Activated CD4-positive, alpha-beta T cell treated with anti-CD3 and anti-CD28 coated beads for 36 hours (primary cell): ENCODE measurements at regions of chr20 and their contacts with region 1.

Region 1: DNA sequence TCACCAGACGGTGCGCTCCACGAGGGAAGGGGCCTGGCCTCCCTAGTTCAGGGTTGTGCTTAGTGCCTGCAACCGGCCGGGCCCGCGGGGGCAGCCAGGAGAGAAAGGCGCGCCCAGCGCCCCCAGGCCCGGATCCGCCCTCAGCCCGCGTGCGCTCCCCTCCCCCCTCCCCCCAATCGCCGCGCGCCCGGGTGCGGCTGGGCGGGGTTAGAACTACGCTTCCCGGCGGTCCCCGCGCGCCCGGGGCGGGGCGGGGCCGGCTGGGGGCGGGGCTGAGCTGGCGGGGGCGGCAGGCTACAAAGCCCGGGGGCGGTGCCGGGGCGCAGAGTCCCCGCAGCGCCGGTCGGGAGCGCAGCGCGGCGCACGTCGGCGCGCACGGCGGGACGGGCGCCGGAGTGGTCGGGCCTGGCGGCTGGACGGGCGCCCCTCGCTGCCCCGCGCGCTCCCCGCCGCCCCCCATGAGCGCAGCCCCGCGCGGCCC is at the start of gene RBM38:
- DNase-seq: peak; percentile 91
- ATAC-seq: peak; percentile 60
- H3K4me3 Mint-ChIP-seq: peak within 1 kb of the TSS; percentile 83
- H3K27ac Mint-ChIP-seq: peak within 1 kb of the TSS; percentile 97
- H3K4me1 Mint-ChIP-seq: peaks cover 44% of the 10 kb centered on the region
- H3K27me3 Mint-ChIP-seq: no peaks in the 10 kb centered on the region
- total RNA-seq, gene RBM38: 96.5 to 101 TPM

Region 2: DNA sequence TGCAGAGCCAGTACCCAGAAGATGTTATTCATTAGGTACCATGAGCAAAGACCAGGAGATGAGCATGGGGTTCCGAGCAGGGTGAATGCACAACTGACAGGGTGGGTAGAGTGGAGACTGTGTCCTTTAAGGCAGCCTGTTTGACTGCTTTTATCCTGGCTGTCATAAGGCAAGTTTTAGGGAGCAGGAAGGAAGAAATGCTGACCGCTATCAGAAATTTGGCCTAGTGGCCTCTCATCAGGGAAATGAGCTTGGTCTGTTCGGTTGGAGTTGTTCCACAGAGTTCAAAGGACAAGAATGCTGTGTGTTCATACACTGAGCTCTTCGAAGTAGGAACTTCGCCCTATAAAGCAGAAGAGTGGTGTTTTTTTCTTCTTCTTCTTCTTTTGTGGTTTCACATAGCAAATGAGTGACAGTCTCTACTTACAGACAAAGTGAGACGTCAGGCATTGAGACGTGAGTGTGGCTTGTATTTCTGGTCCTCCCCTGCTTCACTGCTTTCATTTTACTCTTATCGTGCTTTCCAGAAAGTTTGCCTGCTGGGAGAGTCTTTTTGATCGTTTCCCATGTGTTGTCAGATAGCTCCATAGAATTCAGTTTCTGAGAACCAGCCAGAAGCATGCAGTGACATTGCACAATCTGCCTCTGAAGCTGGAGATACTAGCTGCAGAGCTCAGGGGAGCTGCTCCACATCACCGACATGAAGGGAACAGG is 979.2 kb before region 1 on chr20 and contains the start of gene CASS4:
- CTCF ChIA-PET with region 1: no interaction called
- POLR2A ChIA-PET with region 1: no interaction called
- intact Hi-C with region 1: loop called in 1 of 2 experiments (anchors 10 kb)
- DNase-seq: peak; percentile 63
- ATAC-seq: peak; percentile 53
- H3K4me3 Mint-ChIP-seq: peak within 1 kb of the TSS; percentile 69
- H3K27ac Mint-ChIP-seq: peak within 1 kb of the TSS; percentile 94
- H3K4me1 Mint-ChIP-seq: peaks cover 47% of the 10 kb centered on the region
- H3K27me3 Mint-ChIP-seq: no peaks in the 10 kb centered on the region
- total RNA-seq, gene CASS4: 5.1 to 5.6 TPM

Region 3: GRCh38 chr20:57351042-57351783 is 39.9 kb before region 1 on chr20 and contains the start of gene RAE1:
- CTCF ChIA-PET with region 1: interaction called, 3 read pairs
- POLR2A ChIA-PET with region 1: no interaction called
- intact Hi-C with region 1: loop called (anchors 1 kb)
- DNase-seq: peak; percentile 94
- ATAC-seq: peak; percentile 84
- H3K4me3 Mint-ChIP-seq: peak within 1 kb of the TSS; percentile 96
- H3K27ac Mint-ChIP-seq: peak within 1 kb of the TSS; percentile 89
- H3K4me1 Mint-ChIP-seq: peaks cover 37% of the 10 kb centered on the region
- H3K27me3 Mint-ChIP-seq: no peaks in the 10 kb centered on the region
- total RNA-seq, gene RAE1: 42.7 to 48.9 TPM

Region 4: GRCh38 chr20:57530327-57530981 is 139.3 kb after region 1 on chr20:
- CTCF ChIA-PET with region 1: no interaction called
- POLR2A ChIA-PET with region 1: no interaction called
- intact Hi-C with region 1: no loop called
- DNase-seq: no peak
- ATAC-seq: no peak
- H3K4me3 Mint-ChIP-seq: no peak overlapping the region
- H3K27ac Mint-ChIP-seq: no peak overlapping the region
- H3K4me1 Mint-ChIP-seq: no peaks in the 10 kb centered on the region
- H3K27me3 Mint-ChIP-seq: peaks cover 15% of the 10 kb centered on the region

Region 5: DNA sequence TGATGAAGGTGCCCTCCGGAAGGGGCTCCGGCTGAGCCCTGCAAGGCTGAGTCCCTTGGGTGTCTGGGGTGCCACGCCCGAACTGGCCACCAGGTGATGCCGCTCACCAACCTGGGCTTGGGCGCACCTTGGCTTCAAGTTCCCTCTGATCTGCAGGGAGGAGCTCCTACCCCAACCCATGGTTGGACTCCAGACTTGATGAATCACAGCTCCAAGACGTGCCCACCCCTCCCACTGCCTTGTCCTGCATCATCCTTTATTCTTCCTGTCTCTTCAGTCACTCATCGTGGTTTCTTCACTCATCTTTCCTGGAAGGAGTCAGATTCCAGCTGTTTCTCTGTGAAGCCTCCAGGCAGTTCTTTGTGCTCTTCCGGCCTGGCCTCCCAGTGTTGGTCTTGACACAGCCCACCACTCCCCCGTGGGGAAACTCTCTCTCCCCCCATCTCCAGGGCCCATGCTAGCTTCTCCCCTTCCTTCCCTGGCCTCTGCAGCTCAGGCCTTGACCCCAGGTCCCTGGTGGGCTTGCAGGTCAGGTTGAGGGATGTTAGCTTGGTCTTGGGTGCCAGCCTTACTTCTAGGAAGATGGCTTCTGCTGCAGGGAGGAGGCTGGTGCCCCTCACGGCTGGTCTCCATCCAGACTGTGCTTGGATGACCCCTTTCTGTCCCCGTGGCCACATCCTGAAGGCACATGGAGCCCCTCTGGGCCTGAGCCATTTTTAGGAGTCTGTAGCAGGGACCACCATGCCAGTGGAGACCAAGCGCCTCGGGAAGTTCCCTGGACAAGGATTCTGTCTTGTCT is 231.7 kb after region 1 on chr20:
- CTCF ChIA-PET with region 1: no interaction called
- POLR2A ChIA-PET with region 1: interaction called, 4 read pairs
- intact Hi-C with region 1: loop called in 1 of 2 experiments (anchors 1 kb)
- DNase-seq: peak; percentile 86
- ATAC-seq: peak; percentile 10
- H3K4me3 Mint-ChIP-seq: peak overlapping the region; percentile 36
- H3K27ac Mint-ChIP-seq: peak overlapping the region; percentile 19
- H3K4me1 Mint-ChIP-seq: peaks cover 64% of the 10 kb centered on the region
- H3K27me3 Mint-ChIP-seq: no peaks in the 10 kb centered on the region

Region 6: DNA sequence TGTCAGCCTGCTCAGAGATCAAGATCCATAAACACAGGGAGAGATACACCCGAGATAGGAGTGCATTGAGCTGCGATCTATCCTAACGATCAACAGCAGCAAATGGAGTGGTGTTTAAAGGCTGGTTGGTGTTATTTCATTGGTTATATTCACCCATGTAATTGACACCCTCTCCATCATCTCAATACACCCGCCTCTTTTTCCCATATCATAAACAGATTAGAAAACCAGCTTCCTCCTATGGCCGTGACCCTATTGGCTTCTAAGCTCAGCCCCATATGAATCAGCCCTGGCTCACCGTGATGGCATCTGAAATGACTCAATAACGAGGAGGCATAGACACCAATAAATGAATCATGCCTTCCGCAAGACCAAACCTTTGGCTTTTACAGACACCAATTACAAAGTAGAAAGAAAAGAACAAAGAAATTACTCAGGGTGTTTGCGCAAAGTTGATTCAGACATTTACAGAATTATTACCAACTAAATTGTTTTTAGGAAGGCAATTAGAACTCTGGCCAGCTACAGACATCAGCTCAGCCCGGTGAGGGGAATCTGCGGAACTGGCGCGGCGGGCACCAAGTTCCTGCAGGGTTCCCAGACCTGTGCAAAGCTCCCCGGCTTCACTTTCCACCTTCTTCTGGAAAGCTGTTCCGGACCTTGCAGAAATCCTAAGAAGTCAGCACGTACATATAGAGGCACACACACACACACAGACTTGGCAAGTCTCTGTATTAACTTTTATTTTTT is 307.2 kb after region 1 on chr20:
- CTCF ChIA-PET with region 1: no interaction called
- POLR2A ChIA-PET with region 1: no interaction called
- intact Hi-C with region 1: loop called in 1 of 2 experiments (anchors 5 kb)
- DNase-seq: peak; percentile 89
- ATAC-seq: peak; percentile 99
- H3K4me3 Mint-ChIP-seq: peak overlapping the region; percentile 33
- H3K27ac Mint-ChIP-seq: peak overlapping the region; percentile 77
- H3K4me1 Mint-ChIP-seq: peaks cover 40% of the 10 kb centered on the region
- H3K27me3 Mint-ChIP-seq: no peaks in the 10 kb centered on the region

Region 7: DNA sequence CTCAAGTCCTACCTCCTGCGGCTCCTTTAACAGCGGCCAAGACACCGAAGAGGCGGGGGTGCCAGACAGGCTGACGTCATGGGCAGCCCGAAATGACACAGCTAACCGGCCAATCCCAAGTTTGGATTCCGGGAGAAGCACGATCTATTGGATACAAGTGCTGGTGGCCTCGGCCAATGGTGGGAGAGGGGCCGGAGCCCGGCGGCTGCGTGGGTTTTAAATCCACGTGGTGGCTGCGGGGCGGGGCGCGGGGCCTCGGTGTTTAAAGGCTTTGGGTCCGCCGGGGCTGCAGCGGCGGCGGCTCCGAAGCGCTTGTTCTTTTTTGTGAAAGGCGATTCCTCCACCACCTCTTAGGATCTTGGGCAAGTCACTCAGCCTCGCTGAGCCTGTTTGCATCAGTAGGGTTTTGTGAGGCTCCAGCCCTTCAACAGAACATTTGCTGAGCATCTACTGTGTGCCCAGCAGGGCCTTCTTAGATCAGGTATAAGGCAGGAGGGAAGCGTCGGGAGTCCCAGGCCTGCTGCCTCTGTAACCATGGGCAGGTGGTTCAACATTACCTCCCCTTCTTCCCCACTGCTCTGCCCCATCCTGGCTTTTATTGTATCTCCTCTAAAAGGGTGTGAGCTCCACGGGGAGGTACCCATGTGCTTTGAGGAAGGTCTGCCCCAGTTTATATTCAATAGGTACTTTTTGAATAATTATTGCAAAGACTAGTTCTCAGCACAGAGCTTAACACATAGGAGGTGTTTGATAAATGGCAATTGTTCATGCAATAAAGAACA is 327.6 kb after region 1 on chr20:
- CTCF ChIA-PET with region 1: no interaction called
- POLR2A ChIA-PET with region 1: no interaction called
- intact Hi-C with region 1: loop called in 1 of 2 experiments (anchors 10 kb)
- DNase-seq: peak; percentile 95
- ATAC-seq: peak; percentile 100
- H3K4me3 Mint-ChIP-seq: peak overlapping the region; percentile 37
- H3K27ac Mint-ChIP-seq: no peak overlapping the region
- H3K4me1 Mint-ChIP-seq: peaks cover 5% of the 10 kb centered on the region
- H3K27me3 Mint-ChIP-seq: no peaks in the 10 kb centered on the region

Region 8: GRCh38 chr20:59149651-59150504 is 1758.8 kb after region 1 on chr20:
- CTCF ChIA-PET with region 1: no interaction called
- POLR2A ChIA-PET with region 1: no interaction called
- intact Hi-C with region 1: loop called in 1 of 2 experiments (anchors 2 kb)
- DNase-seq: peak; percentile 82
- ATAC-seq: peak; percentile 42
- H3K4me3 Mint-ChIP-seq: peak overlapping the region; percentile 58
- H3K27ac Mint-ChIP-seq: peak overlapping the region; percentile 95
- H3K4me1 Mint-ChIP-seq: peaks cover 96% of the 10 kb centered on the region
- H3K27me3 Mint-ChIP-seq: no peaks in the 10 kb centered on the region